K562 (cell line): ENCODE measurements at regions of chr13 and their contacts with region 1.

Region 1: DNA sequence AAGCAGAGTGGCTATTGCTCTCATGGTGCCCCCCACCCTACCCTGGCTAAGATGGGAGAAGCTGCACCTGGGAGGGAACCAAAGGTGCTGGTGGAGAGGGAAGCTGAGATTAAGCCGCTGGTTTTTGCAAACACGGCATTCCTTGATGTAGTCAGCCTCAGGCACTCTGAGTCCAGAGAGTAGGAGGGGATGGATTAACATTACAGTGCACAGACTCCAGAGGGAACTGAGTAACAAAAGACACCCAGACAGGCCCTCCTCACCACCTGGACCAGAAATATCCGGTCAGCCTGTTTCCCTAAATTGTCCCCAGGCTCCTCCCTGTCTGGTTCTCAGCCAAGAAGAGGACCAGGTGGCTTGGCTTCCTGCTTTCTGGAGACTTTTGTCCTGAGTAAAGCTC is 28.9 kb upstream of the PABPC3 start:
- DNase-seq: no peak
- ATAC-seq: no peak
- H3K4me3 ChIP-seq: no peak overlapping the region
- H3K27ac ChIP-seq: no peak overlapping the region
- H3K4me1 ChIP-seq: peaks cover 0 to 12% of the 10 kb centered on the region in 2 experiments; a peak in 3 of 5 replicates
- H3K27me3 ChIP-seq: peaks cover 5 to 27% of the 10 kb centered on the region in 2 experiments; a peak in 3 of 5 replicates
- CTCF ChIP-seq: no peak
- EP300 ChIP-seq: no peak
- POLR2A ChIP-seq: no peak
- RAD21 ChIP-seq: no peak

Region 2: DNA sequence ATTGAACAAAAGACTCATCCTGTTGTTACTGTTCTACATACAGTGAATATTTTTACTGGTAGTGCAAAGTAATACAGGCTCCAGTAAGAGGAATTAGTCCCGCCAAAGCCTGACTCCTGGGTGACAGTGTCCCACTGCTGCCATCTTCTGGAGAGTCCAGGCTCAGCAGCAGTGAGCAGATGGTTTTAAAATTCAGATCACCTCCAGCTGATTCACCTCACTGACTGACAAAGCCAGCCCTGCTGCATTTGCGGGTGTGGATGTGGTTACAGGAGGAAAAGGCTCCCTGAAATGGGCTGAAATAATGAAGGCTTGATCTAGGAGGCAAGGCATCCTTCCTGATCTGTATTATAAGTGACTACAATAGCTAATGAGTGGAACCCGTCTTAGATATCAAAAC is 47.2 kb after region 1 on chr13:
- CTCF ChIA-PET with region 1: no interaction called
- POLR2A ChIA-PET with region 1: no interaction called
- in situ Hi-C with region 1: no loop called
- intact Hi-C with region 1: loop called (anchors 10 kb)
- DNase-seq: peak; percentile 54 to 74 (median 59)
- ATAC-seq: peak; percentile 96
- H3K4me3 ChIP-seq: no peak overlapping the region
- H3K27ac ChIP-seq: no peak overlapping the region
- H3K4me1 ChIP-seq: no peaks in the 10 kb centered on the region
- H3K27me3 ChIP-seq: peaks cover 2 to 10% of the 10 kb centered on the region in 2 experiments; a peak in 2 of 5 replicates
- CTCF ChIP-seq: peak; percentile 83 to 89 (median 84)
- EP300 ChIP-seq: no peak
- POLR2A ChIP-seq: no peak
- RAD21 ChIP-seq: peak; percentile 55 to 76